PC-3 (cell line): ENCODE measurements at regions of chr2 and their contacts with region 1.

Region 1: DNA sequence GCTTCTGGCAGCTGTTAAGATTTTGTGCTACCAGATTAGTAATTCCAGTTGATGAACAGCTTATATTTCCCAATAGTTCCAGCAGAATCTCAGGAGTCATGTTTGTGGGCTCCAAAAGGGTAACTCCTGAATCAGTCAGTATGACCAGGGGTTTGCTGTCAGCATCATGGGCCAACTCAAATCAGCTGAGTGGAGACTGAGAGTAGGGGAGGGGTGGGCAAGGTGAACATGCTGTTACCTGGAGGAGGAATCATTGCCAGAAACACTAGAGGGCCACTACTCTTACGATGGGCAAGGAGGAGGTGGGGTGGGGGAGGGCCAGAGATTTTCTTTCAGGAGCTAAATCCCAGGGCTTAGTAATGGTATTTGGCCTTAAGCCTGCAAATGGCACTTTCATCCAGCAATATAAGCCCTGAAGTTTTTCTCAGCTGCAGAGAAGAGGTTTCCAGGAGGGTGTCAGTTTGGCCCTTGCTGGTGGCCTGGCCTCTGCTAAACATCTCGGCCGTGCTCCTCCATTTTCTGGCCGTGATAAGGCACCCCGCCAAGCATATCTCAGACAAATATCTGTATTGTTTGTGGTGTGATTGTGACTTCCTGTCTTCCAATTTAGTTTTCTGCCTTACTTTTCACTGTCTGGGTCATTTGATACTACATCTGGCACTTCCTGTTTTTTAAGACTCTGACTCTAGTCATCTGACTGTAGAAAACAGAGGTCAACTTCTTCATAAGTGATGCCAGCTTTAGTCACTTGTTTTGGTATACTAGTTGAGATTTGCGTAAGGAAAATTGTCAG is 120.5 kb upstream of the CXCR4 start:
- DNase-seq: peak; percentile 68
- ATAC-seq: peak; percentile 47
- H3K4me3 ChIP-seq: no peak overlapping the region
- H3K27ac ChIP-seq: peak overlapping the region; percentile 39
- H3K4me1 ChIP-seq: peaks cover 27% of the 10 kb centered on the region
- H3K27me3 ChIP-seq: no peaks in the 10 kb centered on the region
- CTCF ChIP-seq: no peak

Region 2: GRCh38 chr2:135980434-135981079 is 257.9 kb before region 1 on chr2:
- CTCF ChIA-PET with region 1: no interaction called
- POLR2A ChIA-PET with region 1: no interaction called
- intact Hi-C with region 1: no loop called
- DNase-seq: no peak
- ATAC-seq: no peak
- H3K4me3 ChIP-seq: no peak overlapping the region
- H3K27ac ChIP-seq: no peak overlapping the region
- H3K4me1 ChIP-seq: peaks cover 14% of the 10 kb centered on the region
- H3K27me3 ChIP-seq: no peaks in the 10 kb centered on the region
- CTCF ChIP-seq: no peak

Region 3: DNA sequence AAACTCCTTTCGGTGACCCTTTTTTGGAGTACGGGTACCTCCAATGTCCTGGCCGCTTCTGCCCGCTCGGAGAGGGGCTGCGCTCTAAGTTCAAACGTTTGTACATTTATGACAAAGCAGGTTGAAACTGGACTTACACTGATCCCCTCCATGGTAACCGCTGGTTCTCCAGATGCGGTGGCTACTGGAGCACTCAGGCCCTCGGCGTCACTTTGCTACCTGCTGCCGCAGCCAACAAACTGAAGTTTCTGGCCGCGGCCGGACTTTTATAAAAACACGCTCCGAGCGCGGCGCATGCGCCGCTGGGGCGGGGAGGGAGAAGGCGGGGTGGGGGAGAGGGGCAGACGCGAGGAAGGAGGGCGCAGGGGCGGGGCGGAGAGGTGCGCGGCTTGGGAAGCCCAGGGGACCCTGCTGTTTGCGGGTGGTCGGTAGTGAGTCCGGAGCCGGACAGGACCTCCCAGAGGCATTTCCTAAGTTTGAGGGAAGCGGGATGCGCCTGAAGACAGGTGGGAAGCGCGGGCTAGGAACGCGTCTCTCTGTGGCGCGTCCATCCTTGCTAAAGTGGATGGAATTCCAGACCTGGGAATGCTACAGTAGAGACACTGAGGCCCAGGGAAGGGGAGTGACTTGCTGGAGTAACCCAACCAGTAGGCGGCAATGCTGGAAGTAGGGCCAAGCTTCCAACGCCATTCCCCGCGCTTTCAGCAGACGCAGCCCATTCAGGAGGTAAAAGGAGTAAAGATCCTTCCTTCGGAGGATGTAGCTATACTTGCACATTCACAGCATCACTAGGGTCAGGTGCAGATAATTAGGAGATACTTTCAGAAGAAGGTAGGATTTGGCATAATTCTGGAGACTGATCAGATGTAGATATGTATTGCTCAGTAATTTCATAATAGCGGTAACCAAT is 120.3 kb before region 1 on chr2 and contains the start of gene CXCR4:
- CTCF ChIA-PET with region 1: no interaction called
- POLR2A ChIA-PET with region 1: no interaction called
- intact Hi-C with region 1: loop called (anchors 5 kb)
- DNase-seq: peak; percentile 58
- ATAC-seq: peak; percentile 40
- H3K4me3 ChIP-seq: peak within 1 kb of the TSS; percentile 65
- H3K27ac ChIP-seq: no peak within 1 kb of the TSS
- H3K4me1 ChIP-seq: peaks cover 17% of the 10 kb centered on the region; the same call in 1 of the 2 replicates
- H3K27me3 ChIP-seq: peaks cover 98% of the 10 kb centered on the region
- CTCF ChIP-seq: no peak
- total RNA-seq, gene CXCR4: 2.1 TPM in 1 of 2 replicates, not detected in the other